ENCODE measurements at regions of chr7 and their contacts with region 1.

Region 1: DNA sequence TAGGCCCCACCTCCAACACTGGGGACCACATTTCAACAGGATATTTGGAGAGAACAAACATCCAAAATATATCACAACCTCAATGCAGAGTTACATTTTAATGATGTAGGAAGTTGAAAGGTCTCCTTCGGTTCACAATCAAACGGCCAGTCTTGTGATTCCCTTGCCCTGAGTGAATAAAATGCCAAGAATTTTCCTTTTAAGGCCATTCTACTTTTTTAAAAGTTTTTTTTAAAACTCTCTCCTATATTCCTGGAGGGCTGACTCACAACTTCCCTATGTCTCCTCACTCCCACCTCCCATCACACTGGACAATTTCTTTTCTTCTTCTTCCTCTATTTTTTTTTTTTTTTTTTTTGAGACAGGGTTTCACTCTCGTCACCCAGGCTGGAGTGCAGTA is 693.6 kb upstream of the AUTS2 start:
- DNase-seq: no peak
- H3K4me3 ChIP-seq: no peak overlapping the region
- H3K27ac ChIP-seq: no peak overlapping the region
- H3K4me1 ChIP-seq: no peaks in the 10 kb centered on the region
- H3K27me3 ChIP-seq: no peaks in the 10 kb centered on the region
- CTCF ChIP-seq: no peak

Region 2: DNA sequence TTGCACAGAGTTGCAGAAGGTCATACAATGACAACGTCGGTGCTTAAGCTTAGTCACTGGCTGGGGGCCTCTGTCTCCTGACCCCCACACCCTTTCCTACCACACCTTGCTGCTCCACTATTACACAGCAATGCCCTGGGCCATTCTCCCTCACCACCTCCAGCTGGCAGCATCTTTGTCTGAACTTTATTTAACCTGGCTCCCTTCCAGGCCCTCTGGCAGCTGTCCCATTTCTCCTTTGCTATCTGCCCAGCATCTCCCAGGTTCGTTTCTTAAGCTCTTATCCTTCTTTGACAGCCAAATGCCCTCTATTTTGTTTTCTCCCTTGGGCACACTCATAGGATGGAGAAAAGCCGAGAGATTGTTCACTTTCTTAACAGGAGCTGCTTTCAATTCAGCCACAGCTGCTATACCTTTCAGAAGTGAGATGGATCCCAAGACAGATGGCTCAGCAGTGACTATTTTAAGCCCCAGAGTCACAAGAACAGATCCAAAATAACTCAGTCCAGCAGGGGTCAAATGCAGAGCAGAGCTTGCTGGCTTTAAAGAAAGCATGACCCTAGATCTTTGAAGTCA is 583.5 kb before region 1 on chr7:
- CTCF ChIA-PET with region 1: no interaction called
- POLR2A ChIA-PET with region 1: no interaction called
- intact Hi-C with region 1: no loop called
- DNase-seq: peak; percentile 6 to 87
- H3K4me3 ChIP-seq: no peak overlapping the region; the same call in 1 of the 2 replicates
- H3K27ac ChIP-seq: peak overlapping the region; percentile 60
- H3K4me1 ChIP-seq: peaks cover 24% of the 10 kb centered on the region
- H3K27me3 ChIP-seq: no peaks in the 10 kb centered on the region
- CTCF ChIP-seq: no peak

Region 3: DNA sequence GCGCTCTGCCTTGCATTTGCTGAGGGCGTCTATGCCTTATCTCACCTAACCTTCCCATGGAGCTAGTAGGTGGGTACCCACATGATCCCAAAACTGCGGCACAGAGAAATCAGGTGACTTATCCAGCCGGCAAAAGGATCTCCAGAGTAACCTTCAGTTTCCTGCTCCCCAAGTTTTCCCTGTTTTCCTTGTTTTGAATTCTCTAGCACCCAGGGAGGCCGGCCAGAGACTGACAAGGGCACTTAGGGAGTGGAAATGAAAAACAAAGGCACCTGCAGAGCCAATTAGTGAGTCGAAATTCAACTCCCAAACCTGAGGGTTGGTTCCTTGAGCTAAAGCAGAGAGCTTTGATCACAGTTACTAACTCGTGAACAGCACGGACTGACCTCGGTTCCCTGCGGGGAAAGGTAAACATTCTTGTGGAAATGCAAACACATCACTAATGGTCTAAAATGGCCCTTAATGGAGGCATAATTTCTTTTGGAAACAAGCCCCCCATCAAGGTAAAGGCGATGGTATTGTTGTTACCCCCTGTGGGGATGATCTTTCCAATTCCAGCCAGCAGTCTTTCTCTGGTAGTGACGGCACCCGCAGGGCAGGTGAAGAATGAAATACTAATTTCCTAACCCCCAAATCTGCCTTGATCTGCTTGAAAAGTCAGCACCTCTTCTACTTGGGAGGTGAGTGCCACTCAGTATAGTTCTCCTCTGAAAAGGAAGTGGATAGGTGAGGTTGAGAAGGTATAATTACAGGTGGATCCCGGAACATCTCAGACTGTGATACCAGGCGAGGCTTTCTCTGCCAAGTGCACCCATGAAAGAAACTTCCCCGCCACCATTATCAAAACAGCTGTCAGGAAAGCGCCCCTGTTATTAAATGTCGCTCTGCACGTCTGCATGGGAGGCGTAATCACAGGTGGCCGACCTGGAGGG is 328.1 kb after region 1 on chr7:
- CTCF ChIA-PET with region 1: no interaction called
- POLR2A ChIA-PET with region 1: interaction called, 10 read pairs
- intact Hi-C with region 1: no loop called
- DNase-seq: no peak
- H3K4me3 ChIP-seq: no peak overlapping the region
- H3K27ac ChIP-seq: no peak overlapping the region
- H3K4me1 ChIP-seq: no peaks in the 10 kb centered on the region
- H3K27me3 ChIP-seq: no peaks in the 10 kb centered on the region
- CTCF ChIP-seq: no peak

Measured in PC-9 (cell line).